ENCODE measurements at regions of chr1 and their contacts with region 1.

Region 1: DNA sequence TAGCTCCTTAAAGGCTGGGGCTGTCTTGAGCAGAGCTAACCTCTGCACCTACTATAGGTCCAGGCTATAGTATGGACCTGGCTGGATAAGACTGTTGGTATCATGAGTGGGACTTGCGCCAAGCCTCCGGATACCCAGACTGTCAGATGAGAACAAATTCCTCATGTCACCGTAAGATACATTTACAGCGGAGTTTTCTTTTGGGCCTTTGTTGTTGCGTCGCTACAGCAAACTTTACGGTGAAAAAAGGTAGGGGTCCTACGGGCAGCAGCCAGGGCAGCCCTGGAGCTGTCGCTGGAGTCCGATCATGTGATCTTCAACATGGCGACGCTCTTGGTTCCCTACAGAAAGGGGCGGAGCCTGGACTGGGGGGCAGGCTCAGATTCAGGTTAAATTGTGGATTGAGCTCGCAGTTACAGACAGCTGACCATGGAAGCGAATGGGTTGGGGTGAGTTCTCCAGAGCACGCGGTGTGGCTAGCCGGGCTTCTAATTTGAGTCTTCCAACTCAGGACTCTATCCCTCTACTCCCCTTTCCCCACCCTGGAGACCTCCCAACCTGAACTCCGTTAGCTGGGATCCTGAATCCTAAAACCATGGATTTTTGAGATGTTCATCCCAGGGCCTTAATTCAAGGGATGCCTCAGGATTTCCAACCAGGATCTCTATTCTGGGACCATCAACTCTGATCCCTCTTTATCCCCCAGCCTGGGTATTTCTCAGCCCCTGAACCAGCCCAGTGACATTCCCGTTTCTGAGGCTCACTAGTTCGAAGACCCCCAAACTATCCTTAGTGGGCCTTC is at the start of gene UROD:
- DNase-seq: peak; percentile 91 to 94
- H3K4me3 ChIP-seq: peak within 1 kb of the TSS; percentile 75
- H3K27ac ChIP-seq: peak within 1 kb of the TSS; percentile 41
- H3K4me1 ChIP-seq: peaks cover 20% of the 10 kb centered on the region
- H3K27me3 ChIP-seq: no peaks in the 10 kb centered on the region
- CTCF ChIP-seq: no peak
- total RNA-seq, gene UROD: 77.4 and 81.1 TPM in 2 replicates

Region 2: DNA sequence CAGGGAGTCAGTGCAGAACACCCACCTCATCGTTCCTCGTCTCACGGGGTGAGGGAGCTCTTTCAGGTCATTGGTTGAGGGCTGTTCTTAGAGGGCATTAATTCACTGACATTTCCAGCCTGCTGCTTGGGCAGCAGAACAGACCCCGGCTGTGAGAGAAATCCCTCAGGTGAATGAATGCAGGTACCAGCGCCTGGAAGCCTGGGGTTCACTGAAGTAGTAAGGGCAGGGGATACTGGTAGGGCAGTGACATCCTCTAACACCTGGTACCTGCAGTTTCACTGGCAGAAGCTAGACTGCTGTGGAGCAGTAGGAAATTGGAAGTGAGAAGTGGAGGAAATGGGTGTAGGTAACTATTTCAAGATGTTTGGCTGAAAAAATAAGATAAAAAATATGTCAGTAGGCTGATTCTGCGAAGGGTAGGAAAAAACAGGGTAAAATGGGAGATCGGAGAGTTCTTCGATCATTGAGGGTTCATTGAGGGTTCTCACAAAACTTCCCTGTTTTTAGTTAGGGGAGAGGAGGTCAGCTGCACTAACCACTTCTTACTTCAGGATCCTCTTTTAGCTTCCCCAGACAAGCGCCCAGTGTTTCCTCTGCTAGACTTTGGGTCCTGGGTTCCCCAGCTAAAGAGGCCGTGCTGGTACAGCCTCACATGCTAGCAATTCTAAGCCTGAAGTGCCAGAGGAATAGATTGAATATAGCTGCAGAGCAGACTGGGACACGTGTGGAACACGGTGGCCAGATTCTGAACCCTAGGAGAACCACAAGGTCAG is 551.7 kb before region 1 on chr1:
- CTCF ChIA-PET with region 1: no interaction called
- POLR2A ChIA-PET with region 1: no interaction called
- intact Hi-C with region 1: no loop called
- DNase-seq: no peak
- H3K4me3 ChIP-seq: no peak overlapping the region
- H3K27ac ChIP-seq: no peak overlapping the region
- H3K4me1 ChIP-seq: no peaks in the 10 kb centered on the region
- H3K27me3 ChIP-seq: no peaks in the 10 kb centered on the region
- CTCF ChIP-seq: no peak

Region 3: GRCh38 chr1:44792783-44793714 is 219.0 kb before region 1 on chr1:
- CTCF ChIA-PET with region 1: interaction called, 19 read pairs
- POLR2A ChIA-PET with region 1: no interaction called
- intact Hi-C with region 1: loop called (anchors 2 kb)
- DNase-seq: no peak
- H3K4me3 ChIP-seq: no peak overlapping the region
- H3K27ac ChIP-seq: peak overlapping the region; percentile 36; the same call in 1 of the 2 replicates
- H3K4me1 ChIP-seq: peaks cover 13% of the 10 kb centered on the region
- H3K27me3 ChIP-seq: no peaks in the 10 kb centered on the region
- CTCF ChIP-seq: no peak

Region 4: GRCh38 chr1:44860891-44861425 is 151.1 kb before region 1 on chr1:
- CTCF ChIA-PET with region 1: no interaction called
- POLR2A ChIA-PET with region 1: no interaction called
- intact Hi-C with region 1: no loop called
- DNase-seq: no peak
- H3K4me3 ChIP-seq: no peak overlapping the region
- H3K27ac ChIP-seq: no peak overlapping the region
- H3K4me1 ChIP-seq: no peaks in the 10 kb centered on the region
- H3K27me3 ChIP-seq: no peaks in the 10 kb centered on the region
- CTCF ChIP-seq: no peak

Region 5: DNA sequence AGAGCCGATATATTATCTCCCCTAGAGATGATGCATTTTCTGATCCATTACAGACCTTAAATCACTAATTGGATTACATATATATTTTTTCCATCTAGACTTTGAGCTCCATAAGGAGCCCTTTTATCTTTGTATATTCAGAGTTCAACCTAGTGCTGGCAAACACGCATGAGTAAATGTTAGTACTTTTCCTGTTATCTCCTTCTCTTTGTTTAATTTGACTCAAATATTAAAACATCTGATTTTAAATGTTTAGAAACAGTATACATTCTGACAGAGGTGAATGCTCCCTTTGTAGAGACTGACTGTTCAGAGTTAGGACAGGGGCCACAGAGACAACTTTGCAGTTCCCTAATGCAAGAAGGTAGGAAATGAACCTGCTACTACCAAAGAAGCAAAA is 62.8 kb before region 1 on chr1:
- CTCF ChIA-PET with region 1: no interaction called
- POLR2A ChIA-PET with region 1: interaction called, 22 read pairs
- intact Hi-C with region 1: no loop called
- DNase-seq: no peak
- H3K4me3 ChIP-seq: no peak overlapping the region
- H3K27ac ChIP-seq: no peak overlapping the region
- H3K4me1 ChIP-seq: no peaks in the 10 kb centered on the region
- H3K27me3 ChIP-seq: no peaks in the 10 kb centered on the region
- CTCF ChIP-seq: no peak

Region 6: DNA sequence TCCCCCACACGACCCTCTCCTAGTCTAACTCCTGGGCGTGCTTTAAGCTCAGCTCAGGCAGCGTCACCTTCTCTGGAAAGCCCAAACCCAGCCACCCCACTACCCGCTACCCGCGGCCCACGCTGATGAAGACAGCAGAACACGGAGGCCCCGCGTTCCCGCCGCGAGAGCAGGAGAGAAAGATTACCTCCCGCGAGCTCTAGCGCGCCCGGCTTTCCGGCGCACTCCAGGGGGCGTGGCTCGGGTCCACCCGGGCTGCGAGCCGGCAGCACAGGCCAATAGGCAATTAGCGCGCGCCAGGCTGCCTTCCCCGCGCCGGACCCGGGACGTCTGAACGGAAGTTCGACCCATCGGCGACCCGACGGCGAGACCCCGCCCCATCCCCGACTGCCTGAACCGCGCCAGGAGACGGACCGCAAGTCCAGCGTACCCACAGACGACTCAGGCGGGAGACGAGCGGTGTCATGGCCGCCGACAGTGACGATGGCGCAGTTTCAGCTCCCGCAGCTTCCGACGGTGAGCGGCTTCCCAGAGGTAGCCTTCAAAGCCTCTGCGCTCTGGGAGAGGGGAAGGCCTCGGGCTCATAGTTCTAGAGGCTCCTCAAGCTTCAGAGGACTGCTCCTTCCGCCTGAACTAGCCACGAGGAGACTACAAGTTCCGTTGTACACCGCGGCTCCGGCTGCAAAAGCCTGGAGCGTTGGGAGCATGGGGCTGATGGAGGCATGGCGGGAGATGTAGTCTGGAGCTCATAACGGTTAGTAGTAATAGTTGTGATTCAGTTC is 327.9 kb after region 1 on chr1 and contains the starts of genes MUTYH and TOE1:
- CTCF ChIA-PET with region 1: interaction called, 4 read pairs
- POLR2A ChIA-PET with region 1: no interaction called
- intact Hi-C with region 1: loop called (anchors 1 kb)
- DNase-seq: peak; percentile 79 to 97
- H3K4me3 ChIP-seq: peak within 1 kb of the TSS; percentile 68
- H3K27ac ChIP-seq: peak within 1 kb of the TSS; percentile 86
- H3K4me1 ChIP-seq: peaks cover 55% of the 10 kb centered on the region
- H3K27me3 ChIP-seq: no peaks in the 10 kb centered on the region
- CTCF ChIP-seq: 0 out of 2 replicates have a peak, but pooled peaks have one; percentile 24
- total RNA-seq, gene MUTYH: 52.4 and 53.2 TPM in 2 replicates
- total RNA-seq, gene TOE1: 14.5 and 20.4 TPM in 2 replicates

Region 7: GRCh38 chr1:45583264-45583665 is 571.2 kb after region 1 on chr1:
- CTCF ChIA-PET with region 1: no interaction called
- POLR2A ChIA-PET with region 1: no interaction called
- intact Hi-C with region 1: loop called (anchors 5 kb)
- DNase-seq: peak; percentile 92 to 95
- H3K4me3 ChIP-seq: peak overlapping the region; percentile 86
- H3K27ac ChIP-seq: peak overlapping the region; percentile 64
- H3K4me1 ChIP-seq: peaks cover 17% of the 10 kb centered on the region
- H3K27me3 ChIP-seq: no peaks in the 10 kb centered on the region
- CTCF ChIP-seq: no peak

Region 8: GRCh38 chr1:46340404-46341221 is 1328.6 kb after region 1 on chr1 and contains the start of gene NSUN4:
- CTCF ChIA-PET with region 1: no interaction called
- POLR2A ChIA-PET with region 1: no interaction called
- intact Hi-C with region 1: loop called (anchors 10 kb)
- DNase-seq: peak; percentile 84 to 88
- H3K4me3 ChIP-seq: peak within 1 kb of the TSS; percentile 96
- H3K27ac ChIP-seq: peak within 1 kb of the TSS; percentile 90
- H3K4me1 ChIP-seq: peaks cover 20% of the 10 kb centered on the region; the same call in 1 of the 2 replicates
- H3K27me3 ChIP-seq: no peaks in the 10 kb centered on the region
- CTCF ChIP-seq: peak; percentile 68
- total RNA-seq, gene NSUN4: 31.7 and 33.9 TPM in 2 replicates

Measured in PC-9 (cell line).